ENCODE measurements at regions of chr19 and their contacts with region 1.

Region 1: DNA sequence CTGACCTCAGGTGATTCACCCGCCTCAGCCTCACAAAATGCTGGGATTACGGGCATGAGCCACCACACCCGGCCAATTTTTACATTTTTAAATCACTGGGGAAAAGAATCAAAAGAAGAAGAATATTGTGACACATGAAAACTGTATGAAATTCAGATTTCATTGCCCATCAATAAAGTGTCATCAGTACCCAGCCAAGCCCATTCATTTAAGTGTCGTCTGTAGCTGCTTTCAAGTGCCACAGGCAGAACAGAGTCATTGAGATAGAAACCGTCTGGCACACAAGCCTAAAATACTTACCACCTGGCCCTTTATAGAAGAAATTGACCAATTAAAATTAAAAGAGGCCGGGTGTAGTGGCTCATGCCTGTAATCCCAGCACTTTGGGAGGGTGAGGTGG is 15.3 kb downstream of the COLGALT1 start:
- DNase-seq: no peak
- H3K4me3 ChIP-seq: no peak overlapping the region
- H3K27ac ChIP-seq: no peak overlapping the region
- H3K4me1 ChIP-seq: no peaks in the 10 kb centered on the region
- CTCF ChIP-seq: no peak

Region 2: GRCh38 chr19:17496337-17496997 is 74.3 kb before region 1 on chr19:
- CTCF ChIA-PET with region 1: interaction called, 5 read pairs
- POLR2A ChIA-PET with region 1: no interaction called
- intact Hi-C with region 1: loop called (anchors 5 kb)
- DNase-seq: peak; percentile 92
- H3K4me3 ChIP-seq: no peak overlapping the region
- H3K27ac ChIP-seq: no peak overlapping the region
- H3K4me1 ChIP-seq: peaks cover 20% of the 10 kb centered on the region
- CTCF ChIP-seq: peak; percentile 99

Region 3: DNA sequence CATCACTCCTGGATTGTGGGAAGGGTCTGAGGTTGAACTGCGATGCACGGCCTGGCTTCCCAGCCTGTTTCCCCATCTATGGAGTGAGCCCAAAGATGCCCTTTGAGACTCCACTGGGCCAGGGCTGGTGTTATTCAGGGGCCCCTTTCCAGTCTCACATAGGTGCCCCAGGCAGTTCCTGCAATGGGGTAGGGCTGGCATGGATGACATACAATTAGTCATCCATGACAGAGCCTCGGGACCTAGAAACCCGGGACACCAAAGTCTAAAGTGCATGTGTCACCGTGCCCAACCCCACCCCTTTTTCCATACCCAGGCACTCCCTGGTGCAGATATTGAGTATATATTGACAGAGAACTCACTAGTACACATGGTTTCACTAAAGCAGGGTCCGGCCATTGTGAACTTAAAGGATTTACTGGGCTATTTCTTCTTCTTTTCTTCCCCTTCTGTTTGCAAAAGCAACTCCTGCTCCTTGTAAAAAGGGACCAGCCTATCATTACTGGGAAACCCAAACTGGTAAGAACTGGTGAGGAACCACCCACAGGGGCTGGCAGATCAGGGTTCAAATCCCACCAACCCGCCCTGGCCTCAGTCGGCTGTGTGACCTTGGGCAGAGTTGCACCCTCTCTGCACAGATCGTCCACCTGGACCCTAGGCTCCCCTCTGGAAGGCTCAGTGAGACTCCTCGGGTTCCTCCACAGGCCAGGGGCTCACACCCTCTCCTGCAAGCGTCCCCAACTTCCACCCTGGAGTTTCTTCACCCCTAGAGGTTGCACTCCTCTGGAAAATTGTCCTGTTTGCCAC is 226.8 kb after region 1 on chr19:
- CTCF ChIA-PET with region 1: no interaction called
- POLR2A ChIA-PET with region 1: no interaction called
- intact Hi-C with region 1: no loop called
- DNase-seq: no peak
- H3K4me3 ChIP-seq: no peak overlapping the region
- H3K27ac ChIP-seq: no peak overlapping the region
- H3K4me1 ChIP-seq: no peaks in the 10 kb centered on the region
- CTCF ChIP-seq: no peak

Measured in OCI-LY7 (cell line).